IMR-90 (cell line): ENCODE measurements at regions of chr4 and their contacts with region 1.

Region 1: DNA sequence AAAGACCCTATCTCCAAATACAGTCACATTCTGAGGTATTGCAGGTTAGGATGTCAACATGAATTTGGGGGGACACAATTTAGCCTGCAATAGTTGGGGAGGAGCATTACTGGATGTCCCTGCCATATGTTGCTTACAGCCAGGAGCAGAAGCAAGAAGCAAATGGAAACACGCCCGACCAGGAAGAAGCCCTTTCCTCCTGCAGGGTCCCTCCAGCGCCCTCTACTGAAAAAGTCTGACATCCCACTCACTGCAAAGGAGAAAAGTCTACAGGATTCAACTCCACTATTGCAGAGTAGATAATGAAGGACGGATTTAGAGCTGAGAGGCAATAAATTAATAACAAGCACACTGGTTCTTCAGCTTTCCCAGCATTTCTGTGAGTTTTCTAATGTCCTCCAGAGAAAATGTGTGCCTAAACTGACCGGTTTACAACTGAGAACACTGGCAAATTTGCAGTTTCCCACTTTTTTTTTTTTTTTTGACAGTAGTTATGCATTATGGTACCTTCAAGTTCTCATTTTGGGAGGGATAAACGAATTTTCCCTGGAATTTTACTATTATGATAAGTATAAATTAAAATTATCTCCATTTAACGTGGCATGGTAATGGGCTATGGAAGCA is 31.7 kb downstream of the COQ2 start:
- DNase-seq: peak; percentile 54
- ATAC-seq: peak; percentile 18; the same call in 1 of the 2 replicates
- H3K4me3 ChIP-seq: no peak overlapping the region
- H3K27ac ChIP-seq: no peak overlapping the region
- H3K4me1 ChIP-seq: peaks cover 6% of the 10 kb centered on the region
- H3K27me3 ChIP-seq: no peaks in the 10 kb centered on the region
- CTCF ChIP-seq: peak; percentile 60
- POLR2A ChIP-seq: no peak
- RAD21 ChIP-seq: peak; percentile 55

Region 2: GRCh38 chr4:83067058-83067639 is 185.7 kb before region 1 on chr4:
- CTCF ChIA-PET with region 1: interaction called, 4 read pairs
- POLR2A ChIA-PET with region 1: no interaction called
- dilution Hi-C with region 1: no loop called
- in situ Hi-C with region 1: loop called (anchors 5 kb)
- intact Hi-C with region 1: no loop called
- DNase-seq: no peak
- ATAC-seq: no peak
- H3K4me3 ChIP-seq: no peak overlapping the region
- H3K27ac ChIP-seq: no peak overlapping the region
- H3K4me1 ChIP-seq: peaks cover 4% of the 10 kb centered on the region
- H3K27me3 ChIP-seq: no peaks in the 10 kb centered on the region
- CTCF ChIP-seq: no peak
- POLR2A ChIP-seq: no peak
- RAD21 ChIP-seq: no peak

Region 3: GRCh38 chr4:83110223-83110945 is 142.5 kb before region 1 on chr4:
- CTCF ChIA-PET with region 1: interaction called, 3 read pairs
- POLR2A ChIA-PET with region 1: interaction called, 3 read pairs
- dilution Hi-C with region 1: no loop called
- in situ Hi-C with region 1: no loop called
- intact Hi-C with region 1: loop called (anchors 2 kb)
- DNase-seq: peak; percentile 64
- ATAC-seq: peak; percentile 95
- H3K4me3 ChIP-seq: peak overlapping the region; percentile 59
- H3K27ac ChIP-seq: no peak overlapping the region
- H3K4me1 ChIP-seq: peaks cover 1% of the 10 kb centered on the region; the same call in 1 of the 2 replicates
- H3K27me3 ChIP-seq: 0 out of 2 replicates have a peak, but pooled peaks cover 1% of the 10 kb centered on the region
- CTCF ChIP-seq: peak; percentile 66
- POLR2A ChIP-seq: no peak
- RAD21 ChIP-seq: peak; percentile 35; the same call in 1 of the 2 replicates

Region 4: GRCh38 chr4:83207497-83208105 is 45.3 kb before region 1 on chr4:
- CTCF ChIA-PET with region 1: no interaction called
- POLR2A ChIA-PET with region 1: no interaction called
- dilution Hi-C with region 1: no loop called
- in situ Hi-C with region 1: no loop called
- intact Hi-C with region 1: loop called (anchors 2 kb)
- DNase-seq: peak; percentile 67
- ATAC-seq: peak; percentile 94
- H3K4me3 ChIP-seq: no peak overlapping the region
- H3K27ac ChIP-seq: peak overlapping the region; percentile 77; the same call in 1 of the 2 replicates
- H3K4me1 ChIP-seq: peaks cover 2% of the 10 kb centered on the region
- H3K27me3 ChIP-seq: peaks cover 4% of the 10 kb centered on the region; the same call in 1 of the 2 replicates
- CTCF ChIP-seq: no peak
- POLR2A ChIP-seq: no peak
- RAD21 ChIP-seq: no peak

Region 5: DNA sequence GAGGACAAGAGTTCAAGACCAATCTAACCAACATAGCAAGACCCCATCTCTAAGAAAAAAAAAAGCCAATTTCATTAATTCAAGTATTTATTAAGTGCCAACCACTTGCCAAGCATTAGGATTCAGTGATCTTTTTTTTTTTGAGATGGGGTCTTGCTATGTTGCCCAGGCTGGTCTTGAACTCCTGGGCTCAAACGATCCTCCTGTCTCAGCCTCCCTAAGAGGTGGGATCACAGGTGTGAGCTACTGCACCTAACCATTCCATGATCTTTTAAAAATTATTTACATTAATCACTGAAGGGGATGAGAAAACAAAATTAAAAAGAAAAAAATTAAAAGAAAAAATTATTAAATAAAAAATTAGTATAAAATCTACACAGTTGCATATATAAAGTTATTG is 178.3 kb after region 1 on chr4:
- CTCF ChIA-PET with region 1: no interaction called
- POLR2A ChIA-PET with region 1: no interaction called
- dilution Hi-C with region 1: no loop called
- in situ Hi-C with region 1: no loop called
- intact Hi-C with region 1: no loop called
- DNase-seq: no peak
- ATAC-seq: no peak
- H3K4me3 ChIP-seq: no peak overlapping the region
- H3K27ac ChIP-seq: no peak overlapping the region
- H3K4me1 ChIP-seq: no peaks in the 10 kb centered on the region
- H3K27me3 ChIP-seq: no peaks in the 10 kb centered on the region
- CTCF ChIP-seq: no peak
- POLR2A ChIP-seq: no peak
- RAD21 ChIP-seq: no peak

Region 6: GRCh38 chr4:83484500-83485461 is 231.9 kb after region 1 on chr4 and contains the start of gene ABRAXAS1:
- CTCF ChIA-PET with region 1: no interaction called
- POLR2A ChIA-PET with region 1: no interaction called
- dilution Hi-C with region 1: no loop called
- in situ Hi-C with region 1: no loop called
- intact Hi-C with region 1: no loop called
- DNase-seq: peak; percentile 86
- ATAC-seq: peak; percentile 99
- H3K4me3 ChIP-seq: peak within 1 kb of the TSS; percentile 83
- H3K27ac ChIP-seq: peak within 1 kb of the TSS; percentile 80
- H3K4me1 ChIP-seq: no peaks in the 10 kb centered on the region
- H3K27me3 ChIP-seq: no peaks in the 10 kb centered on the region
- CTCF ChIP-seq: no peak
- POLR2A ChIP-seq: peak; percentile 49; the same call in 1 of the 2 replicates
- RAD21 ChIP-seq: no peak
- total RNA-seq, gene ABRAXAS1: 8.4 and 12.2 TPM in 2 replicates